Right ventricle myocardium inferior (tissue), 1 donor: ENCODE measurements at regions of chr7 and their contacts with region 1.

Region 1: DNA sequence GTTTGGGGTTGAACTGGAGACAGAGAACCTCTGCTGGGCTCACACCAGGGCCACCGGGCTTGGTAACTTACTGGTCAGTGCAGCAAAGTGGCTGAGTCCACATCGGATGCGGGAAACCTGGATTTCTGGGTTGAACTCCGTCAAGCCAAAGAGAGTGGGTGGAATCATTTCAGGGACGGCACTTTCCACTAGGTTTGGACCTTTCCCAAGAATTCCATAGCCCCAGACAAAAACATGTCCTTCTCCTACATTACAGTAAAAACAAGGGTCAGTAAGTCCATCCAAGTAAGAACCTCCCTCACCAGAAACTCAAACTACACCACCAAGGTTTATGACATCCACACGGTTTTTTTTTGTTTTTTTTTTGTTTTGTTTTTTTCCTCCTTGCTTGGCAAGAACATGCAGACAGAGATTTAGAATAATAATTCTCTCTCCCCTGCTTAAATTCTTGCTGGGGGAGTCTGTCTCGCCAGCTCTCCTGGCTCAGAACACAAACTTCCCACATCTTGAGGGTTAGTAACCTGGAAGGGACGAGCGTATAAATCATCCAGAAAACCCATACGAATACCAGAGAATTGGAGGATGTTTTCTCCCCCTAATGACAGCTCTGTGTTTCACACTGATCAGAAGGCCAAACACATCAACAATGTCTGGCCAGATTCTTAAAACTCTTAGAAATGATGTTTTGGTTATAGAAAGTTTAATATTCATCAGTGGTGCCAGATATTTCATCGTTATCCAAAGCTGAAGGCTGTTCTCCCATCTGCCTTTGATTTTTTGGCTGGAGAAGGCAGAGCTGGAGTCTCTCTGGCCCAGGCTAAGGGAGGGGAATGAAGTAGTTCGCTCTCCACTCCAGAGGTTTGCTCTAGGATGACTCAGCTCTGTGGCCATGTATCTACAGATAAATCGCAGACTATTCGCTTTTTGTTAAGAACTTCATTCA is 17.5 kb downstream of the RCC1L start:
- DNase-seq: no peak
- ATAC-seq: peak; percentile 77

Region 2: DNA sequence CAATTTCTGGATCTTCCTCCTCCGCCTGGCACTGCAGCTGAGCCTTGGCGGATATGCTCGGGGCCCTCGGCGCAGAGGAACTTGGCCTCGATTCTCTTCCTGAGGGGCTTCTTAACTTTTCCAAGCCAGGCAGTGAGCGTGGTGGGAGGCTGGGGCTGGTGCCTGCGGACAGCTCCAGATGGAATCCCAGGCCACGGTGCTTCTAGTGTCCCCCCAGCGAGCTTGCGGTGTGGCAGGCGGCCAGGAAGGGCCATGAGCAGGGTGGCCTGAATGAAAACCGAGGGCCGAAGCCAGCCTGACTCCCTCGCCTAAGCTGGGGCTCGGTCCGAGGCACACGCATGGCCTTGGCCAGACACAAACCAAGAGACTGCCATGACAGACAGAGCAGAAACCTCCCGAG is 13.8 kb before region 1 on chr7:
- intact Hi-C with region 1: loop called (anchors 2 kb)
- DNase-seq: no peak
- ATAC-seq: no peak